Activated CD8-positive, alpha-beta T cell treated with anti-CD3 and anti-CD28 coated beads, Interleukin-2, amount 10 ng/mL, durations not matched to agents 7 days and 5 days (primary cell): ENCODE measurements at regions of chr16 and their contacts with region 1.

Region 1: DNA sequence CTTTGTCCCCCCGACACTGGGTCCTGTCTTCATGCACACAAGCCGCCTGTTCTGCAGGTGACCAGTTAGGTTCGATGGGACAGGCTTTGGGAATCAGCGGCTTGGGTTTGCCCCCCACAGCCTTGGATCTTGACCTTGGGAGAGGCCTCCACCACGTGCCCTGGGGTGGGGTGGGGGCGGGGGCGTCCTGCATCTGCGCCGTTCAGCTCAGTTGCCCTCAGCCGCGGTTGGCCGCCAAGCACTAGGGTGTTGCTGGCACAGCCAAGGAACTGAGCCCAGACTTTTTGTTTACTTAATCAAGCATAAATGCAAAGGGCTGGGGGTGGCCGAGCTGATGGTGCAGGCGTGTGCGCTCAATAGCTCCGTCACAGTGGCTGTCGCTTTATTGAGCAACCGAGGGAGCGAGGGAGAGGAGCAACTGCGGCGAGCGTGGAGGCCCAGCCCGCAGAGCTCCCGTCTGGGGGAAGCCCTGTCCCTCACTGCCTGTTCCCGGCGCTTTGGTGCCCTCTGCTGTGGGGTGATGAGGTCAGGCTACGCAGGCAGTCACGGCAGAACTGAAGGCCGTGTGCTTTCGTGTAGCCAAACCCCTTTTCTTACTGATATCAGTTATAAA is 33.9 kb downstream of the JPH3 start:
- DNase-seq: peak; percentile 85
- ATAC-seq: peak; percentile 93
- H3K4me3 Mint-ChIP-seq: peak overlapping the region; percentile 59
- H3K27ac Mint-ChIP-seq: no peak overlapping the region
- H3K4me1 Mint-ChIP-seq: peaks cover 18% of the 10 kb centered on the region
- H3K27me3 Mint-ChIP-seq: peaks cover 6% of the 10 kb centered on the region

Region 2: GRCh38 chr16:87387942-87388817 is 248.0 kb before region 1 on chr16:
- CTCF ChIA-PET with region 1: interaction called, 26 read pairs
- POLR2A ChIA-PET with region 1: interaction called, 3 read pairs
- DNase-seq: peak; percentile 94
- ATAC-seq: peak; percentile 66
- H3K4me3 Mint-ChIP-seq: peak overlapping the region; percentile 56
- H3K27ac Mint-ChIP-seq: peak overlapping the region; percentile 91
- H3K4me1 Mint-ChIP-seq: peaks cover 43% of the 10 kb centered on the region
- H3K27me3 Mint-ChIP-seq: peaks cover 2% of the 10 kb centered on the region

Region 3: GRCh38 chr16:87416826-87417527 is 219.2 kb before region 1 on chr16:
- CTCF ChIA-PET with region 1: interaction called, 38 read pairs
- POLR2A ChIA-PET with region 1: no interaction called
- DNase-seq: peak; percentile 39
- ATAC-seq: no peak
- H3K4me3 Mint-ChIP-seq: no peak overlapping the region
- H3K27ac Mint-ChIP-seq: no peak overlapping the region
- H3K4me1 Mint-ChIP-seq: no peaks in the 10 kb centered on the region
- H3K27me3 Mint-ChIP-seq: no peaks in the 10 kb centered on the region

Region 4: GRCh38 chr16:87562201-87562600 is 74.0 kb before region 1 on chr16:
- CTCF ChIA-PET with region 1: no interaction called
- POLR2A ChIA-PET with region 1: no interaction called
- DNase-seq: no peak
- ATAC-seq: no peak
- H3K4me3 Mint-ChIP-seq: no peak overlapping the region
- H3K27ac Mint-ChIP-seq: no peak overlapping the region
- H3K4me1 Mint-ChIP-seq: no peaks in the 10 kb centered on the region
- H3K27me3 Mint-ChIP-seq: peaks cover 9% of the 10 kb centered on the region

Region 5: DNA sequence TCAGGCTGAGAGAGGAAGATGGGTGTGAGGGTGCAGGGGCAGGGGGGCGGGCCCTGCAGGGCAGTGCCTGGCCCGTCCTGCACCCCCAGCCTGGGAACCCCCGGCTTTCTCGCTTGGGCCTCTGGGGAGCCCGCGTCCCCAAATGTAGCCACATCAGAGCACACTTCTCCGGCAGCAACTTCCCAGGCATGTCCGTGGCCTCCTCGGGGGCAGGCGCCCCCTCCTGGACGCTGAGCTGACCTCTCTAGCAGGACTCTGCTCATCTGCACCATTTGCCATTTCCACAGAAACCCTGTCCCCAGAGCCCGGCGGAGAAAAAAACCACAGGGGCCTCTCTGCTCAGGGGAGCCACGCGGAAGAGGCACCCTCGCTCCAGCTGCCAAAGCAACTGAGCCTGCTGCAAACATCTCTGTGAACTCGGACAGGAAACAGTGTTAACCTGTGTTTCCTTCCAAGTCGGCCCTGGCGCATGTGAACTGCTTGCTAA is 66.2 kb after region 1 on chr16:
- CTCF ChIA-PET with region 1: interaction called, 11 read pairs
- POLR2A ChIA-PET with region 1: no interaction called
- DNase-seq: peak; percentile 66
- ATAC-seq: peak; percentile 76
- H3K4me3 Mint-ChIP-seq: peak overlapping the region; percentile 19
- H3K27ac Mint-ChIP-seq: peak overlapping the region; percentile 79
- H3K4me1 Mint-ChIP-seq: peaks cover 52% of the 10 kb centered on the region
- H3K27me3 Mint-ChIP-seq: no peaks in the 10 kb centered on the region

Region 6: GRCh38 chr16:87765776-87766484 is 129.8 kb after region 1 on chr16 and contains the start of gene KLHDC4:
- CTCF ChIA-PET with region 1: interaction called, 16 read pairs
- POLR2A ChIA-PET with region 1: no interaction called
- DNase-seq: peak; percentile 94
- ATAC-seq: peak; percentile 78
- H3K4me3 Mint-ChIP-seq: peak within 1 kb of the TSS; percentile 96
- H3K27ac Mint-ChIP-seq: peak within 1 kb of the TSS; percentile 99
- H3K4me1 Mint-ChIP-seq: peaks cover 40% of the 10 kb centered on the region
- H3K27me3 Mint-ChIP-seq: no peaks in the 10 kb centered on the region
- total RNA-seq, gene KLHDC4: 91.7 to 101 TPM

Region 7: DNA sequence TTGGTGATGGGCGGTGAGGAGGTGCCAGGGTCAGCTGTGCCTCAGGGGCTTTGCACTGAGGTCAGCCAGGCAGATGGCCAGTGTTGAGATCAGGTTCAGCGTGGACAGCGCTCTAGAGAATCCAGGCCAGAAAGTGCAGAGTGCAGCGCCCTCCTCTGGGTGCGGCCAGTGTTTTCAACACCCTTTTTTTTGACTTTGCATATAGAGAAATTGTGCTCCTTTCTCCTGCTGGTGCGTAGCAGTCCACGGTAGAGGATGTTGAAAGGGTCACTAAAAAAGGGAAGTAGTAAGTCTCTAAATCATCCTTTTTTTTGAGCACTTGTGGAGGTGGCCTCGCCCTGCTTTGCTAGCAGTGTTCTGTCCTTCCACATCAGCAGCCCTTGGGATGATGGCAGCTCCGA is 369.0 kb after region 1 on chr16:
- CTCF ChIA-PET with region 1: no interaction called
- POLR2A ChIA-PET with region 1: no interaction called
- DNase-seq: no peak
- ATAC-seq: no peak
- H3K4me3 Mint-ChIP-seq: no peak overlapping the region
- H3K27ac Mint-ChIP-seq: no peak overlapping the region
- H3K4me1 Mint-ChIP-seq: no peaks in the 10 kb centered on the region
- H3K27me3 Mint-ChIP-seq: no peaks in the 10 kb centered on the region